Thyroid gland (tissue), 4 donors: ENCODE measurements at regions of chr11 and their contacts with region 1.

Region 1: DNA sequence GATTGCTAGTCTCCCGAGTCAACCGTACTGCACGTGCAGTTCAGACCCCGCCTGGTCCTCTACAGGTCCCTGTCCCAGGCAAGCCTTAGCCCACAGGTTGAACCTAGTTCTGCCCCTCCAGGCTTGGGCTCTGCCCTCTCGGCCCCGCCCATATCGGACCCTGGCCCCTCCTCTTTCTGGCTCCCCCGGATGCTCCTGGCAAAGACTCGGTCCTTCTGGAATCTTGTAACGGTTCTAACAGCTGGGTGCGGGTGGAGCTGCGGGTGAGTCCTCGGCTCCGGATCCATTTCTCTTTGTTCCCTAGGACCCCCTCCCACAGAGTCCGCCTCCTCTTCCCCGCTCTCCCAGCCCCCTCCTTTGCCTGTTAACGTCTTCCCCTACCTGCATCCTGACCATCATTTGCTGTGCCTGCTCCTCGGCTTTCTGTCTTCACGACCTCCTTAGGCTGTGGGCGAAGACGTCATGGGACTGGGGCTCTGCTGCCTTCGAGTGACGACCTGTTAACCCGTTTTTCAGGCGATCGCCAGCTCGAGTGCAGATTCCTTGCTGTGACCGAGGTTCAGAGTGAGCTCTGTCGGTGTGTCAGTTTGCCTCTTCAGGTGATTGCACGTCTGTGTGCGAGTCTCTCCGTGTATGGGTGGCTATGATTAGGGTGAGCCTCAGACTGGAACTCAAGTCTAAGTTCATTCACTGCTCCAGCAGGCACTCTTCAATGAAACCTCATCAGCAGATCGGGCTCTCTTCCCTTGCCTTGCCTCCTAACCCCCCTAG is at the start of gene DNHD1:
- DNase-seq: no peak
- H3K4me3 ChIP-seq: no peak within 1 kb of the TSS
- H3K27ac ChIP-seq: no peak within 1 kb of the TSS
- H3K4me1 ChIP-seq: peaks cover 0 to under 1% of the 10 kb centered on the region in 2 donors
- H3K27me3 ChIP-seq: no peaks in the 10 kb centered on the region
- CTCF ChIP-seq: no peak
- POLR2A ChIP-seq: no peak
- total RNA-seq, gene DNHD1: 10.9 to 21.8 (median 14.9) TPM

Region 2: GRCh38 chr11:6389921-6390724 is 107.1 kb before region 1 on chr11 and contains the start of gene SMPD1:
- intact Hi-C with region 1: loop called (anchors 10 kb)
- DNase-seq: peak; percentile 95 to 96
- H3K4me3 ChIP-seq: peak within 1 kb of the TSS; percentile 37 to 75 (median 67)
- H3K27ac ChIP-seq: peak within 1 kb of the TSS; percentile 88 to 94 (median 89)
- H3K4me1 ChIP-seq: peaks cover 8 to 12% of the 10 kb centered on the region in 2 donors
- H3K27me3 ChIP-seq: no peaks in the 10 kb centered on the region
- CTCF ChIP-seq: no peak
- POLR2A ChIP-seq: peak in 1 of 2 donors; percentile 89
- total RNA-seq, gene SMPD1: 39.6 to 82.4 (median 57.6) TPM